A673 (cell line): ENCODE measurements at regions of chr1 and their contacts with region 1.

Region 1: DNA sequence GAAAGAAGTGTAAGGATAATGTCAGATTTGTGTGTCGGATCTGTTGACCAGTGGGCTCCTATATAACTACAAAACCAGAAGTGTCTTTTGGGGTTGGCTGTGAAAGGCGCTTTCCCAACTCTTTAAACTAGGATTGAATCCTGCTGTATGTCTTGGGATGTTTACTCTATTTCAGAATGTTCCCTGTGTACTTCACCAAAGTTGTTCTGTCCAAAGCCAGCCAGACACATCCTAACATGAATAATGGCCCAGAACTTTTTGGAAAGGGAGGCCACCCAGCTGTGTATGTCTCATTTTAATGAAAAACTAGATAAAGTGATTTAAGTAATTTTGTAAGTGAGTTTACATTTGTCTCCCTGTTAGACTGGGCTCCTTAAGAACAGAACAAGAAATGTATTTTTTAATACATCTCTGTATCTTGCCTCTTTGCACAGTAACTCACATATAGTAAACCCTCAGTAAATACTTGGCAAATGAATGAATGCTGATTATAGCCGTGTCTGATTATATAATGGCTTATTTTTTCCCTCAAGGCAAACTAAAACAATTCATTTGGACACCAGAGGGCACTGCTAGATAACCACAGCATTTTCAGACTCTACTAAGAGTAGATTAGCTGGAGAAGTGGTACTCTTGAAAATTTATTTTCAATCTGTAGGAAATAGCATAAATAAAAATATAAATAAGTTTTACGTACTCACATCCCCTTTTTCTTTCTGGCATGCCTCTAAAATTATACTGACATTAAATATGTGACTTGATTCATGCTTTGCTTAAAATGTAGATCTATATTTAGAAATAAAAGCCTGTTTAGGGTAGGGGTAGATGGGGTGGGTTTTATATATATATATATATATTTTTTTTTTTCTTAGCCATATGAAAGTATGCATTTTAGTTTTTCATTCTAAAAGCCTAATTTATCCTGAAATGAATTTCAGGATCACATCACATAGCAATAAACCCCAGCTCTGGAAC is 23.8 kb downstream of the TSEN15 start:
- DNase-seq: peak; percentile 86
- H3K4me3 ChIP-seq: no peak overlapping the region
- H3K27ac ChIP-seq: peak overlapping the region; percentile 7
- H3K4me1 ChIP-seq: peaks cover 13% of the 10 kb centered on the region
- H3K27me3 ChIP-seq: no peaks in the 10 kb centered on the region
- CTCF ChIP-seq: peak; percentile 86

Region 2: GRCh38 chr1:184152434-184152898 is 77.1 kb after region 1 on chr1:
- CTCF ChIA-PET with region 1: interaction called, 3 read pairs
- POLR2A ChIA-PET with region 1: no interaction called
- intact Hi-C with region 1: loop called (anchors 5 kb)
- DNase-seq: peak; percentile 99
- H3K4me3 ChIP-seq: peak overlapping the region; percentile 41
- H3K27ac ChIP-seq: peak overlapping the region; percentile 96
- H3K4me1 ChIP-seq: peaks cover 79% of the 10 kb centered on the region
- H3K27me3 ChIP-seq: no peaks in the 10 kb centered on the region
- CTCF ChIP-seq: no peak

Region 3: GRCh38 chr1:184222652-184223052 is 147.3 kb after region 1 on chr1:
- CTCF ChIA-PET with region 1: interaction called, 4 read pairs
- POLR2A ChIA-PET with region 1: no interaction called
- intact Hi-C with region 1: loop called (anchors 2 kb)
- DNase-seq: peak; percentile 74
- H3K4me3 ChIP-seq: no peak overlapping the region
- H3K27ac ChIP-seq: no peak overlapping the region
- H3K4me1 ChIP-seq: peaks cover 22% of the 10 kb centered on the region
- H3K27me3 ChIP-seq: no peaks in the 10 kb centered on the region
- CTCF ChIP-seq: peak; percentile 95

Region 4: GRCh38 chr1:184359909-184360308 is 284.6 kb after region 1 on chr1:
- CTCF ChIA-PET with region 1: no interaction called
- POLR2A ChIA-PET with region 1: no interaction called
- intact Hi-C with region 1: loop called (anchors 10 kb)
- DNase-seq: no peak
- H3K4me3 ChIP-seq: no peak overlapping the region
- H3K27ac ChIP-seq: no peak overlapping the region
- H3K4me1 ChIP-seq: no peaks in the 10 kb centered on the region
- H3K27me3 ChIP-seq: no peaks in the 10 kb centered on the region
- CTCF ChIP-seq: no peak

Region 5: GRCh38 chr1:184563308-184563707 is 488.0 kb after region 1 on chr1:
- CTCF ChIA-PET with region 1: interaction called, 4 read pairs
- POLR2A ChIA-PET with region 1: no interaction called
- intact Hi-C with region 1: loop called (anchors 5 kb)
- DNase-seq: peak; percentile 56
- H3K4me3 ChIP-seq: no peak overlapping the region
- H3K27ac ChIP-seq: no peak overlapping the region
- H3K4me1 ChIP-seq: peaks cover 20% of the 10 kb centered on the region
- H3K27me3 ChIP-seq: no peaks in the 10 kb centered on the region
- CTCF ChIP-seq: peak; percentile 79

Region 6: GRCh38 chr1:184664042-184664655 is 588.8 kb after region 1 on chr1:
- CTCF ChIA-PET with region 1: interaction called, 27 read pairs
- POLR2A ChIA-PET with region 1: no interaction called
- intact Hi-C with region 1: loop called (anchors 2 kb)
- DNase-seq: peak; percentile 88
- H3K4me3 ChIP-seq: no peak overlapping the region
- H3K27ac ChIP-seq: no peak overlapping the region
- H3K4me1 ChIP-seq: peaks cover 5% of the 10 kb centered on the region
- H3K27me3 ChIP-seq: no peaks in the 10 kb centered on the region
- CTCF ChIP-seq: peak; percentile 96

Region 7: DNA sequence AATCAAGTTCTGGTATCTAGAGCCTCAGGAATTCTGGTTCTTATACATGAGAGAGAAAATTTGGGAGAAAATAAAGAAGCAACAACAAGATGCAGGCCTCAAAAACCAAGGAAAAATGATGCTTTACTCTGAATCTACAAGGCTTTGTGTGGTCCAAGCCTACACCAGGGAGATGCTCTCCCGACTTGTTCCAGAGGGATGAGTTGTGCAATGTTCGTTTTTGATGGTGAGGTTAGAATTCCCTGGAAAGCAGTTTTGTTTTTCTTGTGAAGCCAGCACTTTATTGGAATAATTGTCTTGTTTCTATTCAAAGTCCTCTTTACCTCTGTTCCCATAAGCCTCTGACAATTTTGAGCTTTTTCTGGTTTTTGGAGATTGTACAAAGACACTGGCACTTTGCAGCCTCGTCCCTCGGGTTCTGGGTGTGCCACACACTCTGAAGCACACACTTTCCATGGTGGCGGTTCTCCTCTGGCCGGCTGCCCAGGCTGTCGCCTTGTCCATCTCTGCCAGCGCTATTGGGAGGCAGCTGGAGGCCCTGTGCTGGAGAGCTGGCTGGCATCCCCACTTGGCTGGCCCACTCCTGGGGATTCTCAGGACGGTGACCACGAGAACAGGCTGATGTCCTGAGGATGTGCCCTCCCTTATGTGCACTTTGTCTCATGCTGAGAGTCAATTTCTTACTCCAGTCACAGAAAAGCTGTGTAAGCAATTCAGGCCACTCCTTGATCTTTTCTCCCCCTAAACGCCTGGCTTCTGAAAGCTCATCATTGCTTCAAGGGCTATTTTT is 609.1 kb after region 1 on chr1:
- CTCF ChIA-PET with region 1: no interaction called
- POLR2A ChIA-PET with region 1: no interaction called
- intact Hi-C with region 1: loop called (anchors 5 kb)
- DNase-seq: no peak
- H3K4me3 ChIP-seq: no peak overlapping the region
- H3K27ac ChIP-seq: no peak overlapping the region
- H3K4me1 ChIP-seq: no peaks in the 10 kb centered on the region
- H3K27me3 ChIP-seq: no peaks in the 10 kb centered on the region
- CTCF ChIP-seq: no peak